Psoas muscle (tissue), 8 donors: ENCODE measurements at regions of chr6 and their contacts with region 1.

Region 1: DNA sequence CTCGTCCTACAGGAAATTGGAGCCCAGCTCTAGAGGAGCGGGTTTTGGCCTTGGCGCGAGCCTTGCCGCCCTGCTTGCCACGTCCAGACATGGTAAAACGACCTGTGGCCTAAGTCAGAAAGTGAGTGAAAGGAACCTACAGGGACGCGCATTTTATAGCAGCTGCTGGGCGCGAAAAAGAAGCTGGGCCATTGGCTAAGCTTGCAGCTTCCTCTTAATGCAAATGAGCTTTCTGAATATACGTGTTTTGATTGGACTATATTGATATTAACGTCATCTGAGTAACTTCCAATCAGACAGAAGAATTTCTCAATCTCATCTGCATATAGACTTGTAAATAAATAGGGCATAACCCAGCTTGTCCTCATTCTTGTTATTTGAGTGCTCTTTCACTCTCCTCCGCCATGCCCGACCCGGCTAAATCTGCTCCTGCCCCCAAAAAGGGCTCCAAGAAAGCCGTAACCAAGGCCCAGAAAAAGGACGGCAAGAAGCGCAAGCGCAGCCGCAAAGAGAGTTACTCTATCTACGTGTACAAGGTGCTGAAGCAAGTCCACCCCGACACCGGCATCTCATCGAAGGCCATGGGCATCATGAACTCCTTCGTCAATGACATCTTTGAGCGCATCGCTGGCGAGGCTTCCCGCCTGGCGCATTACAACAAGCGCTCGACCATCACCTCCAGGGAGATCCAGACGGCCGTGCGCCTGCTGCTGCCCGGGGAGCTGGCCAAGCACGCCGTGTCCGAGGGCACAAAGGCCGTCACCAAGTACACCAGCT is 18.9 kb downstream of the OR2B2 start:
- DNase-seq: peak; percentile 66 to 80
- ATAC-seq: peak; percentile 65 to 78 (median 72)
- H3K4me3 ChIP-seq: peak overlapping the region; percentile 77
- H3K27ac ChIP-seq: peak overlapping the region; percentile 37
- H3K4me1 ChIP-seq: peaks cover 4% of the 10 kb centered on the region
- H3K27me3 ChIP-seq: peaks cover 0 to 31% (median 0%) of the 10 kb centered on the region in 3 donors
- CTCF ChIP-seq: no peak

Region 2: DNA sequence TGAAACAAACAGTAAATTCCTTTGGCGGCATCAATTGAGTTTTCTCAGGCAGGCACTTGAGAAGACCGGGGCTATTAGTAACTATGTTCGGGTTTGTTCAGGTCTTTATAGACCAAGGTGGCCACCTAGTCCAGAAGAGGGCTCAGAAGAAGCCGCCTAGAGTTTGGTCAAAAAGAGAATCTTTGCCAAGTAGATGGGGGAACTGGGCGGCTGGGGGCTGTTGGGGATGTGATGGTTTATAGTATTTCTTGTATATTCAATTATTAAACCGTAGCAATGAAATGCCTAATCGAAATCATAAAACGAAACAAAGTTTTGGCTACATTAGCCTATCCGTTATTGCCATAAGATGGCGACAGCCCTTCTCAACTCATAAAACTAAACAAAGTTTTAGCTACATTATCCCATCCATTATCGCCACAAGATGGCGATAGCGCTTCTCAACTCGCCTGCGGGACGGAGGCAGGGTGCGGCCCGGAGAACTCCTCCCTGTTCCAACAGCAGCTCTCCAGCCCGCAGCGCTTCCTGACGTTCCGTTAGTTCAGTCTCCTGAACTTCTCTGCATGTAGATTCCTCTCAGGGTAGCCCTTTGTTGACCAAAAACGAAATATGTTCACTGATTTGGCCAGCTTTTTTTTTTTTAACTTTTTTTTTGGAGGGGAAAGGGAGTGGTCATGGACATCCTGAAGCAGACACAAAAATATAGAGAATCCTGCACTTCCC is 766.3 kb before region 1 on chr6:
- intact Hi-C with region 1: loop called in 1 of 2 experiments (anchors 5 kb)
- DNase-seq: peak; percentile 82 to 90
- ATAC-seq: peak; percentile 82 to 85 (median 84)
- H3K4me3 ChIP-seq: peak overlapping the region; percentile 57
- H3K27ac ChIP-seq: peak overlapping the region; percentile 36
- H3K4me1 ChIP-seq: no peaks in the 10 kb centered on the region
- H3K27me3 ChIP-seq: no peaks in the 10 kb centered on the region
- CTCF ChIP-seq: peak; percentile 87

Region 3: DNA sequence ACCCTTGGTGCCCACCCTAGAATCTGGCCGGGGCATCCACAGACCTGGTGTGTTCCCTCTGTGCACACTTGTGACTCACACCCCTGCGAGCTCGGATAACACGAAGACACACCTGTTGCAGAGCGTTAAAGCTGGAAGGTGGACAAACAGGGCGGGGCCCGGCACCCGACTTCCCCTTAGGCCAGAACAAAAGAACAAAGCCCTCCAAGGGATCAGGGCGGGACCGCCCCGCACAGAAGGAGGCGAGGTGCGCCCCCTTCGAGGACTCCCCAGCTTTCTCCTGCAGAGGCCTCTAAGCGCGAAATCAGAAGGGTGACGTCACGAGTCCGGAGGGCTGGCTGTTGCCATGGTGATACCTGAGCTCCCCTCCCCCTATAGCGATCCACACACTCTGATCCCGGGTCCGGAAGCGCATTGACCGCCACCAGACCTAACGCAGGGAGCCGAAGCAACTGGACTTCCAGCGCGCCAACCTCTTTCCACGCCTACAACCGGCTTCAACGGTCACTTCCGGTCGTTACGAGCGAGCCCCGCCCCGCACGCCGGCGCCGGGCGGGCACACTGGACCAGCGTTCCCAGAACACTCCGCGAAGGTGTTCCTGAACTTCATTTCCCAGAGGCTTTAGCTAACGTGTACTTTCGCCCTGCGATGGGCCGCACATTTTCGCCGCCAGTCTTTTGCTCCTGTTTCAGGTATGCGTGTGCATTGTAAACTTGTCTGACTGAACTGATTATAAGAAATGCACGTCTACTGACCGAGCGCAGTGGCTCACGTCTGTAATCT is 420.4 kb before region 1 on chr6 and contains the start of gene ZNF184:
- intact Hi-C with region 1: loop called in 1 of 2 experiments (anchors 2 kb)
- DNase-seq: peak; percentile 95 to 97
- ATAC-seq: peak; percentile 99 to 100 (median 99)
- H3K4me3 ChIP-seq: peak within 1 kb of the TSS; percentile 94
- H3K27ac ChIP-seq: peak within 1 kb of the TSS; percentile 99
- H3K4me1 ChIP-seq: peaks cover 11% of the 10 kb centered on the region
- H3K27me3 ChIP-seq: no peaks in the 10 kb centered on the region
- CTCF ChIP-seq: no peak
- total RNA-seq, gene ZNF184: 4.2 to 4.9 (median 4.5) TPM

Region 4: GRCh38 chr6:27753668-27754407 is 139.4 kb before region 1 on chr6:
- intact Hi-C with region 1: loop called in 1 of 2 experiments (anchors 5 kb)
- DNase-seq: peak; percentile 56 to 60
- ATAC-seq: peak; percentile 47 to 62 (median 57)
- H3K4me3 ChIP-seq: peak overlapping the region; percentile 75
- H3K27ac ChIP-seq: no peak overlapping the region
- H3K4me1 ChIP-seq: no peaks in the 10 kb centered on the region
- H3K27me3 ChIP-seq: peaks cover 0 to 23% (median 10%) of the 10 kb centered on the region in 3 donors
- CTCF ChIP-seq: no peak

Region 5: GRCh38 chr6:27874016-27874415 is 19.2 kb before region 1 on chr6:
- intact Hi-C with region 1: no loop called
- DNase-seq: no peak
- ATAC-seq: no peak
- H3K4me3 ChIP-seq: peak overlapping the region; percentile 59
- H3K27ac ChIP-seq: no peak overlapping the region
- H3K4me1 ChIP-seq: peaks cover 6% of the 10 kb centered on the region
- H3K27me3 ChIP-seq: peaks cover 0 to 56% (median 16%) of the 10 kb centered on the region in 3 donors
- CTCF ChIP-seq: no peak

Region 6: DNA sequence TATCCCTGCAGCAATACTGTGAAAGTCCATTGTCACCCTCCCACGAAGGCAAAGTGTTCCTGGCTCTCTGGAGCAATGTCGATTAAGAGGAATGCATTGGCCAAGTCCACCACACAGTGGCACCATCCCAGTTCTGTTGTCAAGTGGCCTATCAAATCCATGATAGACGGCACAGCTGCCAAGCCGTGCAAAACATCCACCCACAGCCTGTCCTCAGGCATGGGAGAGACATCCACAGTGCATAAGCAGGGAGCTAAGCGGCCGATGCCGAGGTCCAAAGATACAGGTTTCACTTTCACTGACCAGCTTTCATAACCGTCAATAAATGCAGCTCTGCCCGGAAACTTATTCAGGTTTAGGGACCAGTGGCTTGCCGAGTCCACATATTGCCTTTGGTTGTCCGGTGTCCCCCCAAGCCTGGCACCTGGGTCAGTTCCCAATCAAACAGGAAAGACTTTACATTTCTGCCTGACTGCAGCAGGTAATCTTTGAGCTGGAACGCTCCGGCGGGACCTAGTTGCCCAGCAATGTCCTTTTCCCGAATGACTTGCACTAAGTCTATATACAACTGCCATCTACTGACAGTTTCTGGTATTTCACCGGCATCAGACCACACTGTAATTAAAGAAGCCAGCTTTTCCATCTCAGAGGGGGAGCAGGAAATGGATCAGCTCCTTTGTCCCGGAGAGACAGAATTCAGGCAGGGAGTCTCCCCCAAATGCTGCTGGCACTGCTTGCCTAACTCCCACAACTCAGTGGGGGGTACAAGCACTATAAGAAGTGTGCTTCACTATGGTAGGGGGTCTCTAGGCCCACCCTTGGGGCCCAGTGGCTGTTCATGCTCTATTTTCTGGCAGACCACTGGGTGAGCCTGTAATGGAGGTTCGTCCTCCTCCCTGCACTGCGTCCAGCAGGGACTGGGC is 462.8 kb after region 1 on chr6:
- intact Hi-C with region 1: loop called in 1 of 2 experiments (anchors 10 kb)
- DNase-seq: peak; percentile 59 to 72
- ATAC-seq: peak; percentile 82 to 97 (median 90)
- H3K4me3 ChIP-seq: peak overlapping the region; percentile 91
- H3K27ac ChIP-seq: peak overlapping the region; percentile 92
- H3K4me1 ChIP-seq: peaks cover 34% of the 10 kb centered on the region
- H3K27me3 ChIP-seq: no peaks in the 10 kb centered on the region
- CTCF ChIP-seq: peak; percentile 77